B cell (primary cell): ENCODE measurements at regions of chr16 and their contacts with region 1.

Region 1: DNA sequence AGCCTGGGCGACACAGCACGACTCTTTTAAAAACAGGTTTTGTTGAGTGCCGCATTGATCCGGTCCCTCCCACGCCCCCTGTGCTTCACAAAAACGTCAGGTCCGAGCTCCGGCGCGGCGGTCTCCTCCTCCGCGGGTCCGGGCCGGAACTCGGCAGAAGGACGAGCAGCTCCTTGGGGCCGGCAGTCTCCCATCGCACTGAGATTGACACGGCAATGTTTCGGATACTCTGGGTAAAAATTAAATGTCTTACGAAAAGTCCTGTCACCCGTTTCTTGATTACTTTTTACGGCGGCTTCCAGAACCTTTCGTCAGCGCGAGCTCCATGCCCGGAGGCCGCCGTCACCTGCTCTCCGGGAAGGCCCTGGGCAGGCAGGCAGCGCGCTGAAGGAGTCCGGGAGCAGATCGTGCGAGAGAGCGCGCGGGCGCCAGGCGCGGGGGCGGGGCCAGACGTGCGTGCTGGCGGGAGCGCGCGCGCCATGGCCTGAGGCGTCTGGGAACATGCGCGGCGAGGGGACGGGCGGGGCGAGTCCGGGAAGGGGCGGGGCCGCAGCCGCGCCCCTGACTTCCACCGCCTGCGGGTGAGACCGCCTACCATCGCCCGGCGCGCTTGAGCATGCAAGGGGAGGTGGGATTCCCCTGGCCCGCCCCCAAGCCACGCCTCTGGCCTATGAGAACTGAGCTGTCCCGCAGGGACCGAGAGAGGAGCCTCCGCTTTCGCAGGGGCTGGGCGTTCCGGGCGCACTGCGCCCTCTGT is 11.7 kb upstream of the SRL start:
- DNase-seq: peak; percentile 100
- ATAC-seq: peak; percentile 96
- H3K4me3 ChIP-seq: peak overlapping the region; percentile 22 to 90 (median 80)
- H3K4me3 Mint-ChIP-seq: peak overlapping the region; percentile 97
- H3K27ac ChIP-seq: peak overlapping the region; percentile 73 to 88
- H3K27ac Mint-ChIP-seq: peak overlapping the region; percentile 98
- H3K4me1 ChIP-seq: peaks cover 0 to 11% of the 10 kb centered on the region in 2 donors
- H3K4me1 Mint-ChIP-seq: peaks cover 6% of the 10 kb centered on the region
- H3K27me3 ChIP-seq: no peaks in the 10 kb centered on the region
- H3K27me3 Mint-ChIP-seq: no peaks in the 10 kb centered on the region
- CTCF ChIP-seq: no peak

Region 2: GRCh38 chr16:3880623-3881498 is 372.7 kb before region 1 on chr16 and contains the start of gene CREBBP:
- CTCF ChIA-PET with region 1: interaction called, 5 read pairs
- POLR2A ChIA-PET with region 1: interaction called, 3 read pairs
- intact Hi-C with region 1: loop called (anchors 5 kb)
- DNase-seq: peak; percentile 95
- ATAC-seq: peak; percentile 84
- H3K4me3 ChIP-seq: peak within 1 kb of the TSS; percentile 70 to 94 (median 74)
- H3K4me3 Mint-ChIP-seq: peak within 1 kb of the TSS; percentile 97
- H3K27ac ChIP-seq: peak within 1 kb of the TSS; percentile 50 to 81
- H3K27ac Mint-ChIP-seq: peak within 1 kb of the TSS; percentile 94
- H3K4me1 ChIP-seq: peaks cover 29 to 34% of the 10 kb centered on the region in 2 donors
- H3K4me1 Mint-ChIP-seq: peaks cover 36% of the 10 kb centered on the region
- H3K27me3 ChIP-seq: no peaks in the 10 kb centered on the region
- H3K27me3 Mint-ChIP-seq: peaks cover 6% of the 10 kb centered on the region
- CTCF ChIP-seq: no peak
- total RNA-seq, gene CREBBP: 205 and 206 TPM in 2 replicates

Region 3: GRCh38 chr16:3983081-3983520 is 270.5 kb before region 1 on chr16:
- CTCF ChIA-PET with region 1: interaction called, 18 read pairs
- POLR2A ChIA-PET with region 1: no interaction called
- intact Hi-C with region 1: no loop called
- DNase-seq: peak; percentile 25
- ATAC-seq: no peak
- H3K4me3 ChIP-seq: no peak overlapping the region
- H3K4me3 Mint-ChIP-seq: no peak overlapping the region
- H3K27ac ChIP-seq: no peak overlapping the region
- H3K27ac Mint-ChIP-seq: no peak overlapping the region
- H3K4me1 ChIP-seq: no peaks in the 10 kb centered on the region
- H3K4me1 Mint-ChIP-seq: no peaks in the 10 kb centered on the region
- H3K27me3 ChIP-seq: no peaks in the 10 kb centered on the region
- H3K27me3 Mint-ChIP-seq: peaks cover 4% of the 10 kb centered on the region
- CTCF ChIP-seq: no peak

Region 4: DNA sequence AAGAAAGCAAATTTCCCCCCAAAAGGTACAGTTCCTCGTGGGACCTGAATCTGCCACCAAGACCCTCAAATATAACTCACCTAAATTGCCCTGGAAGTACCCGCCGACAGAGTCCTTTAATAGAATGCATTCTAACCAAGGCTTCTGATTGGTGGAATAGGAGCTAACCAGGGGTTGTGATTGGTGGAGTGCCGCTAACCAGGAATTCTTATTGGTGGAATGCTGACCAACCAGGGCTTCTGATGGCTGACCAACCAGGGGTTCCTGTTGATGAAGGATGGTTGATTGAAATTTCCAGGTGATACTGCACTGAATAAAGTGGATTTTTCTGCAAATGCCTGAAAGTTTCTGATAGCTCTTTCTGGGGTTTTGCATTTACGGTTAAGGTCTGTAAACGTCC is 12.8 kb after region 1 on chr16:
- CTCF ChIA-PET with region 1: interaction called, 97 read pairs
- POLR2A ChIA-PET with region 1: interaction called, 13 read pairs
- intact Hi-C with region 1: loop called (anchors 1 kb)
- DNase-seq: no peak
- ATAC-seq: no peak
- H3K4me3 ChIP-seq: no peak overlapping the region
- H3K4me3 Mint-ChIP-seq: no peak overlapping the region
- H3K27ac ChIP-seq: no peak overlapping the region
- H3K27ac Mint-ChIP-seq: no peak overlapping the region
- H3K4me1 ChIP-seq: peaks cover 7 to 9% of the 10 kb centered on the region in 2 donors
- H3K4me1 Mint-ChIP-seq: peaks cover 7% of the 10 kb centered on the region
- H3K27me3 ChIP-seq: no peaks in the 10 kb centered on the region
- H3K27me3 Mint-ChIP-seq: no peaks in the 10 kb centered on the region
- CTCF ChIP-seq: no peak

Region 5: DNA sequence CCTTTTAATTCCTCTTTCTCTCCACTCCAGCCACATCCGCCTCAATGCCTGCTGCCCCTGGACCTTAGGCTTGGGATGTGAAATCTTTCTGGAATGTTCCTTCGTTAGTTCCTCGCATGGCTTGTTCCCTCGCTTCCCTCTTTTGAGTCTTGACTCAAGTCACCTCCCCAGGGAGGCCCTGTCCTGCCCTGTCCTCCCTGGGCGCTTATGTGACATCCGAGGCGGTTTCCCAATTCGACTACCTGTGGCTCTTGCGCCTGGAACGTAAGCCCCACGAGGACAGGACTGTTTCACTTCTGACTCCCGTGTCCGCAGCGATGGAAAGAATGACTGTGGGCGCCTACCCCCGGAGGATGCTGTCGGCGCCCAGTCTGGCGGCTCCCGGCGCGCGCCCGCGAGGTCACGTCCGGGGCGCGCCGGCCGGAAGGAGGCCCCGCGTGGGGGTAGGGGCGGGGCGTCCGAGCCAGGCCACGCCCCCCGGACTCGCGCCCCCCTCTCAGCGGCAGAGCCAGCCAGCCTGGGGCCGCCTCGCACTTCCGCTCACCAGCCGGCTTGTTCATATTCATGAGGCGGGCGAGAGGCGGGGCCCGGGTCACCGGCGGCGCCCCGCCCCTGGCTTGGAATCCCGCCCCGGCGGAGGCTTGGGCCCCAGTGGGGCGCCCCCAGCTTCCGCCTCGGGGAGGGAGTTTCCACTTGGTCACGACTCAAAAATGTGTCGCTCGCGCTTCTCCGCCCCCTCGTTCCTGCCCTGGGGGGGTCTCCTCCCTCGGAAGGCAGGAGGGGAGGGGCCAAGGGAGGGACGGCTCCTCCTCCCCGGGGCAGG is 53.9 kb after region 1 on chr16:
- CTCF ChIA-PET with region 1: interaction called, 6 read pairs
- POLR2A ChIA-PET with region 1: no interaction called
- intact Hi-C with region 1: loop called (anchors 1 kb)
- DNase-seq: peak; percentile 98
- ATAC-seq: peak; percentile 86
- H3K4me3 ChIP-seq: peak overlapping the region; percentile 58 to 95 (median 72)
- H3K4me3 Mint-ChIP-seq: peak overlapping the region; percentile 96
- H3K27ac ChIP-seq: peak overlapping the region; percentile 89 to 91
- H3K27ac Mint-ChIP-seq: peak overlapping the region; percentile 96
- H3K4me1 ChIP-seq: peaks cover 14 to 38% of the 10 kb centered on the region in 2 donors
- H3K4me1 Mint-ChIP-seq: peaks cover 35% of the 10 kb centered on the region
- H3K27me3 ChIP-seq: peaks cover 0 to 2% (median 0%) of the 10 kb centered on the region in 4 experiments
- H3K27me3 Mint-ChIP-seq: no peaks in the 10 kb centered on the region
- CTCF ChIP-seq: no peak